PC-9 (cell line): ENCODE measurements at regions of chr19 and their contacts with region 1.

Region 1: DNA sequence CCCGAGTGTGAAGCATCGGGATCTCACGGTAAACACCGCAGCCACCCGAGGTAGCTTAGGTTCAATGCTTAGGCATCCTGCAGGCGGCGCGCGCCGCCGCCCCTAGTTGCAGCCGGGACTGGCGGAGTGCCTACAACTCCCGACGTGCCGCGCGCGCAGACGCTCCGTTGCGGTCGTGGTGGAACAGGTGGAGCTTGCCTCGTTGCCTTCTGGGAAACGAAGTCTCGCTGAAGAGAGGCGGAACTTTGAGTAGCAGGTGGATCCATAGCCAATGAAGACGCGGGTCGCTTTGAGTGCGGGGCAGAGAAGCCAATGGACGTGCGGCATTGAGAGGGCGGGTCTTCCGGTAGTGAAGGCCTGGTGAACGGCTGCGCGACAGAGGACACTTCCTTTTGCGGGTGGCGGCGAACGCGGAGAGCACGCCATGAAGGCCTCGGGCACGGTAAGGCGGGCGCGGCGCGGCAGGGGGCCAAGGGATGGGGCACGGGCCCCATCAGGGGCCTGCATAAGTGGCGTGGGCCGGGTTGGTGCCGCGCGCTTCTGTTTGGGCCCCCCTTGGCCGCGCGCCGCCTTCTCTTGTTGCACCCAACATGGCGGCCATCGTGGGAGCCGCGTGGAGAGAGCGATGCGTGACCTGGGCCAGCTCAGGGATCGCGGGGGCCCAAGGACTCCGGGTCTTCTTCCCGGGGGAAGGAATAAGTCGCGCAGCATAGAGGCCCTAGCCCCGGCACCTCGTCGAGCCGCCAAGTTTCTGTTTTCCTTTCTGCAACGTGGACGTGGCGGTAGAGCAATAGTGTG is at the start of gene RPL18A:
- DNase-seq: peak; percentile 97 to 100
- H3K4me3 ChIP-seq: peak within 1 kb of the TSS; percentile 87
- H3K27ac ChIP-seq: peak within 1 kb of the TSS; percentile 79
- H3K4me1 ChIP-seq: peaks cover 31% of the 10 kb centered on the region
- H3K27me3 ChIP-seq: no peaks in the 10 kb centered on the region
- CTCF ChIP-seq: peak; percentile 81
- total RNA-seq, gene RPL18A: 1,887 and 2,038 TPM in 2 replicates

Region 2: DNA sequence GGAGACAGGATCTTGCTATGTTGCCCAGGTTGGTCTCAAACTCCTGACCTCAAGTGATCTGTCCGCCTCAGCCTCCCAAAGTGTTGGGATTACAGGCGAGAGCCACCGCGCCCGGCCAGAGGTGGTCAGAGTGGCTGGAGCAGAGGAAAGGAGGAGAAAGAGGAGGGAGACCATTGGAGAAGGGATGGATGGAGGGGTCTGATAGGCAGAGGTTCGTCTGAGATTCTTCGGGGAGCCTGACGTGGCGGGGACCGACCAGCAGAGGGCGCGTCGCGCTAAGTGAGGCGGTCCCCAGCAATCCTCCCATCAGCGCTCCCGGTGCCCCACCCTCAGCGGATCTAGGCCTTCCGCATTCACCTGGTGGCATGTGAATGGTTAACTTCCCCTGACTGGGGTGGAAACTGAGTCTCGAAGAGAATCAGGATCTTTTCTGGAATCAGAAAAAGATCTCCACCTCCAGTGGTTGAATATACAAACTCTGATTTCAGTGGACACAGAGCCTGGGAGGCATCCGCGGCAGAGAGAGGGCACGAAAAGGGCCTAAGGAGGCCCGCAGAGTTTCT is 513.5 kb before region 1 on chr19:
- CTCF ChIA-PET with region 1: no interaction called
- POLR2A ChIA-PET with region 1: no interaction called
- intact Hi-C with region 1: loop called (anchors 5 kb)
- DNase-seq: peak in 1 of 2 experiments; percentile 79
- H3K4me3 ChIP-seq: no peak overlapping the region
- H3K27ac ChIP-seq: no peak overlapping the region
- H3K4me1 ChIP-seq: peaks cover 10% of the 10 kb centered on the region
- H3K27me3 ChIP-seq: no peaks in the 10 kb centered on the region
- CTCF ChIP-seq: peak; percentile 94

Region 3: DNA sequence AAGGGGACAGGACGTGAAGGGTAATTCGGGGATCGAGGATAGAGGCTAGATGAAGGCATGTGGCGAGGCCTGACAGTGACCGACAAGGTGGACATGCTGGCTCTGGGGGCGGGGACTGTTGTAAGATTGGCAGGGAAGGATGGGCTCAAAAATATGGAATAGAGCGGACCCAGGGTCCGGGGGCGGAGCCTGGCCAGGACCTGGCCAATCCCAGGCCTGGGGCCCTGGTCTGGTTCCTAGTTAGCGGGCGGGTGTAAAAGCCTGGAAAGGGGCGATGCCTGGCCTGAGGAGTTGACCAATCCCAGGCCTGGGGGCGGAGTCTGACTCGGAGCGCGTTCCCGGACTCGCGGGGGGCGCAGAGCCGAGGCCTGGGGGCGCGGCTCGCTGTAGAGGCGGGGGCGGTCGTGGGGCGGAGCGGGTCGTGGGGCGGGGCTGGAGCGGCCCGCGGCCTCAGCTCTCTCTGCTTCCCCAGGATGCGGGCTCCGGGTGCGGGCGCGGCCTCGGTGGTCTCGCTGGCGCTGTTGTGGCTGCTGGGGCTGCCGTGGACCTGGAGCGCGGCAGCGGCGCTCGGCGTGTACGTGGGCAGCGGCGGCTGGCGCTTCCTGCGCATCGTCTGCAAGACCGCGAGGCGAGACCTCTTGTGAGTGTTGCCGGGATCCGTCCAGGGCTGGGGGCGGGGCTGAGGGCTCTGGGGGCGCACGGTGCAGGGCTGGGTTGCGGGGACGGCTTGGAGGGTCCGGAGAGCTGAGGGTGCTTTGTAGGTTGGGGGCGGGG is 389.5 kb before region 1 on chr19 and contains the start of gene SLC27A1:
- CTCF ChIA-PET with region 1: no interaction called
- POLR2A ChIA-PET with region 1: no interaction called
- intact Hi-C with region 1: loop called (anchors 5 kb)
- DNase-seq: peak; percentile 98 to 99
- H3K4me3 ChIP-seq: peak within 1 kb of the TSS; percentile 88
- H3K27ac ChIP-seq: peak within 1 kb of the TSS; percentile 71
- H3K4me1 ChIP-seq: peaks cover 31% of the 10 kb centered on the region
- H3K27me3 ChIP-seq: no peaks in the 10 kb centered on the region
- CTCF ChIP-seq: no peak
- total RNA-seq, gene SLC27A1: 30.8 and 40.2 TPM in 2 replicates

Region 4: GRCh38 chr19:17549085-17549740 is 310.5 kb before region 1 on chr19:
- CTCF ChIA-PET with region 1: interaction called, 10 read pairs
- POLR2A ChIA-PET with region 1: no interaction called
- intact Hi-C with region 1: no loop called
- DNase-seq: no peak
- H3K4me3 ChIP-seq: no peak overlapping the region
- H3K27ac ChIP-seq: no peak overlapping the region
- H3K4me1 ChIP-seq: no peaks in the 10 kb centered on the region
- H3K27me3 ChIP-seq: no peaks in the 10 kb centered on the region
- CTCF ChIP-seq: no peak

Region 5: GRCh38 chr19:17761148-17761547 is 98.6 kb before region 1 on chr19:
- CTCF ChIA-PET with region 1: interaction called, 13 read pairs
- POLR2A ChIA-PET with region 1: no interaction called
- intact Hi-C with region 1: no loop called
- DNase-seq: no peak
- H3K4me3 ChIP-seq: no peak overlapping the region
- H3K27ac ChIP-seq: no peak overlapping the region
- H3K4me1 ChIP-seq: peaks cover 10% of the 10 kb centered on the region
- H3K27me3 ChIP-seq: no peaks in the 10 kb centered on the region
- CTCF ChIP-seq: no peak

Region 6: DNA sequence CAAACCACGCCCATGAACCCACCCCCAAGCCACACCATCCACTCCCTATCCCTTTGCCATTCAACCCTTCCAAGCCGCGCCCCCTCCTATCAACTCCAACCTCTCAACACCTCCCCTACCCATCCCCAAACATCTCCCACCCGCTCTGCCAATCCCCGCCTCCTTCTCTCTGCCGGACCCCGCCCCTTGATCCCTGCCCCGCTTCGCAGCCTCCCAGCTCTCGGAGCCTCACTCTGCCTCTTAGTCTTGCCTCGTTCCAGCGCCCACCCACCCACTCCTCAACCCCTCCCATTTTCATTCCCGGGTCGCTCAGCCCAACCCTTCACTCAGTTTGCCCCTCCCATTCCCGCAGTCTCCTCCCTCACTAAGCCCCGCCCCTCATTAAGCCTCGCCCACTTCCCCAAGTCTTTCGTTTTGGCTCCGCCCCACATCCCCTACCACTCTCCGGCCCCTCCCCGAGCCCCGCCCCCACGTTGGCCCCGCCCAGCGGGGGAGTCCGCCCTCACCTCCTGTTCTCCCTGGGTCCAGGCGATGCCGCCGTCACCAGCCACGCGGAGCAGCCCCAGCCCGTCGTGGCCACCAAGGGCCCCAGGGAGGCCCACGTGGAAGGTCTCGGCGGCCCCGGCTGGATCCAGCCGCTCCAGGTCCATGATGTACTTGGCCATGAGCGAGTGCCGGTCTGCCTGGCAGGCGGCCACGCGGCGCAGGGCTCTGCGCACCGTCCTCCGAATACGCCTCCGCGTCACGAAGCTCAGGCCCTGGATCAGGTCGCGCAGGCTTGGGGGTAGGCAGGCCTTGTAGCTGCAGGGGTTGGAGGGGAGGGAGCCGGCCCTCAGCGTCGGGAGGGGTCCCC is 17.7 kb before region 1 on chr19:
- CTCF ChIA-PET with region 1: no interaction called
- POLR2A ChIA-PET with region 1: no interaction called
- intact Hi-C with region 1: no loop called
- DNase-seq: peak; percentile 91 to 96
- H3K4me3 ChIP-seq: peak overlapping the region; percentile 93
- H3K27ac ChIP-seq: peak overlapping the region; percentile 63
- H3K4me1 ChIP-seq: peaks cover 10% of the 10 kb centered on the region
- H3K27me3 ChIP-seq: no peaks in the 10 kb centered on the region
- CTCF ChIP-seq: no peak

Region 7: GRCh38 chr19:17932485-17933338 is 73.0 kb after region 1 on chr19 and contains the start of gene CCDC124:
- CTCF ChIA-PET with region 1: interaction called, 67 read pairs
- POLR2A ChIA-PET with region 1: interaction called, 35 read pairs
- intact Hi-C with region 1: loop called (anchors 1 kb)
- DNase-seq: peak; percentile 85 to 94
- H3K4me3 ChIP-seq: peak within 1 kb of the TSS; percentile 87
- H3K27ac ChIP-seq: peak within 1 kb of the TSS; percentile 86
- H3K4me1 ChIP-seq: peaks cover 12% of the 10 kb centered on the region
- H3K27me3 ChIP-seq: no peaks in the 10 kb centered on the region
- CTCF ChIP-seq: peak; percentile 95
- total RNA-seq, gene CCDC124: 114 and 118 TPM in 2 replicates

Region 8: DNA sequence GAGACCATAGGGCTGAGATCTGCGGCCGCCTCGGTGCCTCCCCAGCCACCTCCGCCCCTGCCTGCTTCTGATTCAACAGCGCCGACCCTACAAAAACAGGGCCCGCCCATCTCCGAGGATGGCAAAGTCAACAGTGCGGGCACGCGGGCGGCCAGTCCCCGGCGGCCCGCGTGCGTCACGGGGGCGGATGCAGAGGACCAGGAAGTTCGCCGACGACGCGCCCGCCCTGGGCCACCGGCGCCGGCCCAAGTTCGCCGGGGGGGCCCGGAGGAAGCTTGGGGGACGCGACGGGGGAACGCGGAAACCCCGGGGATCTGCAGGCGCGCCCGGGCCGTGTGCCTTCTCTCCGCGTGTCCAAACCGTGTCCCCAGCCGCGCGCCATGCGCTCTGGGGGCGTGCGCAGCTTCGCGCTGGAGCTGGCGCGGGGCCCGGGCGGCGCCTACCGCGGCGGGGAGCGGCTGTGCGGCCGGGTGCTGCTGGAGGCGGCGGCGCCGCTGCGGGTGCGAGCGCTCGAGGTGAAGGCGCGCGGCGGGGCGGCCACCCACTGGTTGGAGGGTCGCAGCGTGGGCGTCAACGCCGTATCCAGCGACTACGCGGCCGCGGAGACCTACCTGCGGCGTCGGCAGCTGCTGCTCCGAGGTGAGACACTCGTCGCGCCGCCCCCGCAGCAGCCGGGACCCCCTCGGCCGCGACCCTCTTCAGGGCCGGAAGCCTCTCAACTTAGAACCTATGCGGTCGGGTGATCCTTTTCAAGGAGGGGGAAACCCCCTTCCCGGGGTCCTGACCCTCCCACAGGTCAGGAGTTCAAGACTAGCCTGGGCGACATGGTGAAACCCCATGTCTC is 141.4 kb after region 1 on chr19:
- CTCF ChIA-PET with region 1: interaction called, 3 read pairs
- POLR2A ChIA-PET with region 1: interaction called, 9 read pairs
- intact Hi-C with region 1: loop called (anchors 2 kb)
- DNase-seq: peak; percentile 85 to 88
- H3K4me3 ChIP-seq: peak overlapping the region; percentile 99
- H3K27ac ChIP-seq: peak overlapping the region; percentile 75
- H3K4me1 ChIP-seq: peaks cover 38% of the 10 kb centered on the region
- H3K27me3 ChIP-seq: no peaks in the 10 kb centered on the region
- CTCF ChIP-seq: no peak